Activated CD4-positive, alpha-beta memory T cell treated with anti-CD3 and anti-CD28 coated beads for 36 hours (primary cell): ENCODE measurements at regions of chr2 and their contacts with region 1.

Region 1: GRCh38 chr2:125696561-125696960 is 959.4 kb upstream of the GYPC start:
- DNase-seq: no peak
- H3K4me3 Mint-ChIP-seq: no peak overlapping the region
- H3K27ac Mint-ChIP-seq: no peak overlapping the region
- H3K4me1 Mint-ChIP-seq: no peaks in the 10 kb centered on the region
- H3K27me3 Mint-ChIP-seq: no peaks in the 10 kb centered on the region

Region 2: GRCh38 chr2:125656190-125656589 is 40.4 kb before region 1 on chr2:
- CTCF ChIA-PET with region 1: no interaction called
- POLR2A ChIA-PET with region 1: no interaction called
- intact Hi-C with region 1: no loop called
- DNase-seq: no peak
- H3K4me3 Mint-ChIP-seq: no peak overlapping the region
- H3K27ac Mint-ChIP-seq: no peak overlapping the region
- H3K4me1 Mint-ChIP-seq: no peaks in the 10 kb centered on the region
- H3K27me3 Mint-ChIP-seq: no peaks in the 10 kb centered on the region

Region 3: DNA sequence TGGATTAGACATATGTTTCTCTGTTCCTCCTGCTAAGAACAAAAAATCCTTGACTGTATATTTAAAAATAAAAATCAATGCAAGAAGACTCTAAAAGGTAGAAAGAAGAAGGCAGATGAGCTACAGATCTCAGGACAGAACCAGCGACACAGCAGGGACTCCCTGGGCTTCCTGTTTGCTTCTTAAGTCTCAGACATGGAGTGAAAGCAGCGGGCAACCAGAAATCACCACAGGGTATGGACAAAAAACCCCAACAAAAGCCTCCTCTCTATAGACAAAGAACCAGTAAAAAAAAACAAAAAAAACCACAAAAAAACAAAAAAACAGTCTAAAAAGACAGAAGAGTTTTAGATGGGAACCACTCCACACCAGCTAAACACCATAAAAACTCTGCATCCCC is 11.6 kb before region 1 on chr2:
- CTCF ChIA-PET with region 1: no interaction called
- POLR2A ChIA-PET with region 1: no interaction called
- intact Hi-C with region 1: loop called (anchors 1 kb)
- DNase-seq: no peak
- H3K4me3 Mint-ChIP-seq: no peak overlapping the region
- H3K27ac Mint-ChIP-seq: no peak overlapping the region
- H3K4me1 Mint-ChIP-seq: no peaks in the 10 kb centered on the region
- H3K27me3 Mint-ChIP-seq: no peaks in the 10 kb centered on the region